GM12878 (cell line): ENCODE measurements at regions of chr3 and their contacts with region 1.

Region 1: DNA sequence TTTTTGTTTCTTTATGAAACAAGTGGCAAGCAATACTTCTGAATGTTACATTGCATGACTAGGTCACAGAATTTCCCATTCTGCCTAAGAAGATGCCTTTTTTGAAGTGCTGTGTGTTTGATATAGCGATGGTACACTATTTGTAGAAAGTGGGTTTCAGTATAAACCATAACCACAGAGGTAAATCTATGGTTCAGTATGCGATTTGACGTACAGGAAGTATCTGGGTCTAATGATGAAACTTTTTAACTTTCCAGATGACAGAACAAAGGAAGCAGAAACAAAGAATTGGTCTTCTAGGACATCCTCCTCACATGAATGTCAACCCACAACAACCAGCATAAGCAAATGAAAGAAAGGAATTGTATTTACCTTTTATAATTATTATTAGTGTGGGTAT is 133.4 kb upstream of the BHLHE40 start:
- DNase-seq: peak; percentile 89
- ATAC-seq: peak; percentile 75
- H3K4me3 ChIP-seq: no peak overlapping the region
- H3K27ac ChIP-seq: peak overlapping the region; percentile 74
- H3K4me1 ChIP-seq: peaks cover 45% of the 10 kb centered on the region
- H3K27me3 ChIP-seq: no peaks in the 10 kb centered on the region
- CTCF ChIP-seq: no peak
- EP300 ChIP-seq: peak; percentile 98 to 99
- POLR2A ChIP-seq: no peak
- RAD21 ChIP-seq: no peak

Region 2: DNA sequence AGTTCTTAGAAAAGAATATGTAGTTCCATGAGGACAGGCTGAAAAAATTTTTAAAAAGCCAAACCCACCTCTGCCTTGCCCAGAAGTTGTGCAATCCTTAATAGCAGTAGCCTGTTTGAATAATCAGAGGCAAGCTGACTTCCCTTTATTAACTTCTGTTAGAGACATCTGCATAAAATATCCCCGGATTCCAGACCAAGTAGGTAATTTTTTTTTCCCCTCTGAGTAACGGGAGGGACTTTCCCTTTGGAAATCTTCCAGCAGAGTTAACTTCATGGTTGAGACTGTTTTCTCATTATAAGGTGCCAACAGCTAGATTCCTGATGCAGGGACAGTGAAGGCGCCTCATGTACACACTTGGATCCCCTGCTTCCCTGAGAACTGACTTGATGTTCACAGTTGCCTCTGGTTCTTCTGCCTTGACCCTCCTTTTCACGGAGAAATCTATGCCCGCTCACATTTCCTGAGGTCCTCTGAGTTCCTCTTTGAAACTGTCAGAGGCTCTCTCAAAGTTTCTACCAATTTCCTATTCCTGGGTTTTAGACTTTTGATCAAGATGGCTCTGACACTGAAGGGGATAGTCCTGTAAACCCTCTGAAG is 94.3 kb before region 1 on chr3:
- CTCF ChIA-PET with region 1: interaction called, 5 read pairs
- POLR2A ChIA-PET with region 1: interaction called, 5 read pairs
- RAD21 ChIA-PET with region 1: interaction called, 21 read pairs
- SMC1A ChIA-PET with region 1: interaction called, 21 read pairs
- in situ Hi-C with region 1: no loop called
- intact Hi-C with region 1: loop called (anchors 1 kb)
- DNase-seq: no peak
- ATAC-seq: peak; percentile 3
- H3K4me3 ChIP-seq: peak overlapping the region; percentile 65
- H3K27ac ChIP-seq: peak overlapping the region; percentile 95
- H3K4me1 ChIP-seq: peaks cover 71% of the 10 kb centered on the region
- H3K27me3 ChIP-seq: no peaks in the 10 kb centered on the region
- CTCF ChIP-seq: no peak
- EP300 ChIP-seq: peak in 1 of 2 experiments; percentile 4; a peak in 1 of 4 replicates
- POLR2A ChIP-seq: no peak
- RAD21 ChIP-seq: no peak

Region 3: GRCh38 chr3:4826237-4827100 is 19.4 kb before region 1 on chr3:
- CTCF ChIA-PET with region 1: interaction called, 7 read pairs
- POLR2A ChIA-PET with region 1: interaction called, 9 read pairs
- RAD21 ChIA-PET with region 1: interaction called, 70 read pairs
- SMC1A ChIA-PET with region 1: interaction called, 185 read pairs
- in situ Hi-C with region 1: no loop called
- intact Hi-C with region 1: loop called (anchors 1 kb)
- DNase-seq: no peak
- ATAC-seq: peak; percentile 9
- H3K4me3 ChIP-seq: no peak overlapping the region
- H3K27ac ChIP-seq: no peak overlapping the region
- H3K4me1 ChIP-seq: peaks cover 21% of the 10 kb centered on the region
- H3K27me3 ChIP-seq: no peaks in the 10 kb centered on the region
- CTCF ChIP-seq: no peak
- EP300 ChIP-seq: no peak
- POLR2A ChIP-seq: peak; percentile 31; the same call in 1 of the 2 replicates
- RAD21 ChIP-seq: no peak

Region 4: DNA sequence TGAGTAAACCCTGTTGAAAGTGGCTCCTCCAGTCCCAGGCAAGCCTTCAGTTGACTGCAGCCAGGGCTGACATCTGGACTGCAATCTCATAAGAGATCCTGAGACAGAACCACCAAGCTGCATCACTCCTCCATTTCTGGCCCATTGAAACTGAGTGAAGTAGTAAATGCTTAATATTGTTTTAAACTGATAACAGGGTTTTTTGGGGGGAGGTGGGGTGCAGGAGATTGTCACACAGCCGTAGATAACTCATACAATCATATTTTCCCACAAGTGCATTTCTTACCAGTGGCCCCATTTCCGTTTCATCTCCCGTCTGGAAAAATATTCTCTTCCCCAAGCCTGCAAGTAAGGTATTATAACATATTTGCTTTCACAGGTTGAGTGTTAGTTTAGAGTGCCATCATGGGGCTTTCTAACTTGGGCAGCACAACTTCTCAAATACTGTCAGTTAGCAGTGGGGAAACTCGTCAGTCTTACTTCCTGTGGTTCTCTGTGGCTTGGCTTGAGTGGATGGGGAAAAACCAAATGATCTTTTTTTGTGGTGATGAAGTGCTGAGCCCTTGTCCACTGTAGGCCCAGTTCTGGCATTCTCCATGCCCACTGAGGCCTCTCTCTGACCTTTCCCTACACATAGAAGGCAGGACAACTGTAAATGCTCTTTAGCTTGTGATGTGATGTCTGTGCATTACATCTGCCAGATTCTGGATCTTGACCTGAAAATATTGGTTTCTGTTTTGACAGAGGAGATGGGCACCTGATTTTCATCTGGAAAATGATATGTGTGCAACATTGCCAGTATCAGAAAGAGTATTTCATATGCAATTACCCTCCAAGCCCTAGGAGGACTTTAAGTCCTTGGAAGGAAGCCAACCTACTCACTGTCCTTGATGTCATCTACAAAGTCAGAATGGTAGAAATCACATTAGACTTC is 43.3 kb after region 1 on chr3:
- CTCF ChIA-PET with region 1: interaction called, 4 read pairs
- POLR2A ChIA-PET with region 1: interaction called, 3 read pairs
- RAD21 ChIA-PET with region 1: interaction called, 4 read pairs
- SMC1A ChIA-PET with region 1: interaction called, 14 read pairs
- in situ Hi-C with region 1: no loop called
- intact Hi-C with region 1: loop called (anchors 1 kb)
- DNase-seq: peak; percentile 71
- ATAC-seq: peak; percentile 96
- H3K4me3 ChIP-seq: no peak overlapping the region; the same call in 1 of the 2 replicates
- H3K27ac ChIP-seq: peak overlapping the region; percentile 69
- H3K4me1 ChIP-seq: peaks cover 12% of the 10 kb centered on the region
- H3K27me3 ChIP-seq: no peaks in the 10 kb centered on the region
- CTCF ChIP-seq: peak in 1 of 3 experiments; percentile 45; a peak in 3 of 6 replicates
- EP300 ChIP-seq: peak; percentile 51 to 71; a peak in 3 of 4 replicates
- POLR2A ChIP-seq: no peak
- RAD21 ChIP-seq: peak; percentile 74

Region 5: GRCh38 chr3:4928277-4928789 is 82.5 kb after region 1 on chr3:
- CTCF ChIA-PET with region 1: interaction called, 3 read pairs
- POLR2A ChIA-PET with region 1: interaction called, 6 read pairs
- RAD21 ChIA-PET with region 1: interaction called, 3 read pairs
- SMC1A ChIA-PET with region 1: interaction called, 3 read pairs
- in situ Hi-C with region 1: no loop called
- intact Hi-C with region 1: loop called (anchors 2 kb)
- DNase-seq: no peak
- ATAC-seq: peak; percentile 58
- H3K4me3 ChIP-seq: no peak overlapping the region
- H3K27ac ChIP-seq: no peak overlapping the region
- H3K4me1 ChIP-seq: peaks cover 19% of the 10 kb centered on the region
- H3K27me3 ChIP-seq: no peaks in the 10 kb centered on the region
- CTCF ChIP-seq: no peak
- EP300 ChIP-seq: peak; percentile 18 to 20; a peak in 2 of 4 replicates
- POLR2A ChIP-seq: no peak
- RAD21 ChIP-seq: no peak

Region 6: DNA sequence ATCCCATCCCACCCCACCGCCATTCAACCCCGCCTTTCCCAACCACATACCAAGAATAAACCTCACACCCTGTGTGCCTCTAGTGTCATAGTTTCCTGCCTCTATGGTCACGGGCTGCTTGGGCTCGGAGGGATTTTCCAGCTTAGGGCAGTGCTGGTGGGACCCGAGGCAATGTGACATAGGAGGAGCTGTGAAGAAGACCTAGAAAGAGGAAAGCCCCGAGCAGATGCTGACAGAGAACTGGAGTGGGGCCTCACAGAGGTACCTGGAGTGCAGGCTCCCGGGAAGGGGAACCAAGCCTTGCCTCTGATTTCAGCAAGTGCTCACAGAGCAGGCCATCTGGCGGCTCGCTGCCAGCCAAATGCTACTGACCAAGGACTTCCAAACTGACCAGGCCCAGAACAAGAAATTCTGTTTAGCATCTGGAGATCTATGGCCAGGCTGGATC is 160.9 kb after region 1 on chr3:
- CTCF ChIA-PET with region 1: no interaction called
- POLR2A ChIA-PET with region 1: interaction called, 6 read pairs
- RAD21 ChIA-PET with region 1: interaction called, 18 read pairs
- SMC1A ChIA-PET with region 1: interaction called, 4 read pairs
- in situ Hi-C with region 1: no loop called
- intact Hi-C with region 1: no loop called
- DNase-seq: peak; percentile 95
- ATAC-seq: peak; percentile 78
- H3K4me3 ChIP-seq: 0 out of 2 replicates have a peak overlapping the region, but pooled peaks have one; percentile 26
- H3K27ac ChIP-seq: peak overlapping the region; percentile 94
- H3K4me1 ChIP-seq: peaks cover 53% of the 10 kb centered on the region
- H3K27me3 ChIP-seq: no peaks in the 10 kb centered on the region
- CTCF ChIP-seq: peak in 1 of 3 experiments; percentile 24; a peak in 2 of 6 replicates
- EP300 ChIP-seq: peak; percentile 98 to 99
- POLR2A ChIP-seq: peak; percentile 69; the same call in 1 of the 2 replicates
- RAD21 ChIP-seq: peak; percentile 30; the same call in 1 of the 2 replicates

Region 7: GRCh38 chr3:5057857-5058324 is 212.0 kb after region 1 on chr3:
- CTCF ChIA-PET with region 1: interaction called, 3 read pairs
- POLR2A ChIA-PET with region 1: no interaction called
- RAD21 ChIA-PET with region 1: interaction called, 3 read pairs
- SMC1A ChIA-PET with region 1: interaction called, 11 read pairs
- in situ Hi-C with region 1: no loop called
- intact Hi-C with region 1: loop called (anchors 5 kb)
- DNase-seq: peak; percentile 75
- ATAC-seq: peak; percentile 93
- H3K4me3 ChIP-seq: no peak overlapping the region
- H3K27ac ChIP-seq: no peak overlapping the region
- H3K4me1 ChIP-seq: peaks cover 34% of the 10 kb centered on the region
- H3K27me3 ChIP-seq: no peaks in the 10 kb centered on the region; a peak in 1 of 4 replicates
- CTCF ChIP-seq: peak; percentile 70 to 87 (median 76)
- EP300 ChIP-seq: no peak
- POLR2A ChIP-seq: no peak
- RAD21 ChIP-seq: peak; percentile 99